IMR-90 (cell line): ENCODE measurements at regions of chr3 and their contacts with region 1.

Region 1: DNA sequence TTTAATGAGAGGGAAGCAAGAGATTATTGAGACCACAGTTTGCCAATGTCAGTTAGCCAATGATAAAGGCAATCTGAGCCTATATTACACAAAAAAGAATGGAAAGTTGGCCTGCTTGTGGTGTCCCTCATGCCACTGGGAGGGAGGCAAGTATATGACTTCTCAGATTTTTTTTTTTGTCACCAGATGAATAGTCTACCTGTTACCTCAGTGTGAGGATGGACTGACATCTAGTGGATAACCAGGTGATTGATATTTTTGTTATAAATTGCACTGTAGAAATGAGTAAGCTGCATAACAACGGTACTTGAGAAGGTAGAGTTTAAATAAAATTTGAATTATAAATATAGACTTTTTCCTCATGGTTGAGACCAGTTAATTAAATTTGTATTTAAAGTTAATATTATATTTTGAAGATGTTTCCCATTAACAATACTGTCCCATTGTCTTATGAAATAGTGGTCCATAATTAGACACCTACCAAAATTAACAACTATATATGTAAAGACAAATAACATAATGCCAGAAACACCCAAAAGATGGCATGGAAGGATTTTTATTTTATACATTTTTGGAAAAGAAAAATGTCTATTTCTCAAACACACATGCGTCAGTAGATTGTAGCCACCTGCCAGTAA is 237.8 kb upstream of the GADL1 start:
- DNase-seq: peak; percentile 53
- ATAC-seq: peak; percentile 42; the same call in 1 of the 2 replicates
- H3K4me3 ChIP-seq: no peak overlapping the region
- H3K27ac ChIP-seq: no peak overlapping the region
- H3K4me1 ChIP-seq: no peaks in the 10 kb centered on the region
- H3K27me3 ChIP-seq: no peaks in the 10 kb centered on the region; the same call in 1 of the 2 replicates
- CTCF ChIP-seq: peak; percentile 60
- POLR2A ChIP-seq: no peak
- RAD21 ChIP-seq: peak; percentile 87

Region 2: DNA sequence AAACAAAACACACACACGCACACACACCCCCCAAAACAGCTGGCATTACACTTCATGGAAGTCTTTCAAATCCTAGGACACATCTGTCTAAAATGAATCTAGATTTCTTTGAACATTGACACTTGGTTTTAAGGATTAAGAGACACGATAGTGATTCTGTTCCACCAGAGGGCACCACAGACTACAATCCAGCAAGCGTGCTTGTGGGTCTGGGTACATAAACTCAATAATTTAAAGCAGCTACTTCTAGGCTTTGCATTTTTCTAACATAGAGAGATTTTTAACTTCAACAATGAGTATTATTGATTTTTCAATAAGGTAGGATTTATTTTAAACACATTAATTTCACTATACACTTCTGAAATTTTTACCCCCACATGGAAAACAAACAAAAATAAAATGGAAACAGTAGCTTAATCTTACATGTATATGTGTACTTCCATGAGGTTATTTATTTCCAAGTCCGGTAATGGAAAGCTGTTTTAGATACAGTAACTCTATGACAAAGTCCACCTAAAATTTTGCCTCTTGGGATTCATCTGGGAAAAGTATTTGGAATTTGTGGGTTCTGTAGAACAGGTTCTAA is 1089.9 kb before region 1 on chr3:
- CTCF ChIA-PET with region 1: no interaction called
- POLR2A ChIA-PET with region 1: no interaction called
- dilution Hi-C with region 1: no loop called
- in situ Hi-C with region 1: loop called (anchors 25 kb)
- intact Hi-C with region 1: loop called (anchors 5 kb)
- DNase-seq: peak; percentile 79
- ATAC-seq: peak; percentile 81
- H3K4me3 ChIP-seq: no peak overlapping the region
- H3K27ac ChIP-seq: no peak overlapping the region
- H3K4me1 ChIP-seq: no peaks in the 10 kb centered on the region
- H3K27me3 ChIP-seq: no peaks in the 10 kb centered on the region
- CTCF ChIP-seq: peak; percentile 88
- POLR2A ChIP-seq: no peak
- RAD21 ChIP-seq: peak; percentile 92

Region 3: DNA sequence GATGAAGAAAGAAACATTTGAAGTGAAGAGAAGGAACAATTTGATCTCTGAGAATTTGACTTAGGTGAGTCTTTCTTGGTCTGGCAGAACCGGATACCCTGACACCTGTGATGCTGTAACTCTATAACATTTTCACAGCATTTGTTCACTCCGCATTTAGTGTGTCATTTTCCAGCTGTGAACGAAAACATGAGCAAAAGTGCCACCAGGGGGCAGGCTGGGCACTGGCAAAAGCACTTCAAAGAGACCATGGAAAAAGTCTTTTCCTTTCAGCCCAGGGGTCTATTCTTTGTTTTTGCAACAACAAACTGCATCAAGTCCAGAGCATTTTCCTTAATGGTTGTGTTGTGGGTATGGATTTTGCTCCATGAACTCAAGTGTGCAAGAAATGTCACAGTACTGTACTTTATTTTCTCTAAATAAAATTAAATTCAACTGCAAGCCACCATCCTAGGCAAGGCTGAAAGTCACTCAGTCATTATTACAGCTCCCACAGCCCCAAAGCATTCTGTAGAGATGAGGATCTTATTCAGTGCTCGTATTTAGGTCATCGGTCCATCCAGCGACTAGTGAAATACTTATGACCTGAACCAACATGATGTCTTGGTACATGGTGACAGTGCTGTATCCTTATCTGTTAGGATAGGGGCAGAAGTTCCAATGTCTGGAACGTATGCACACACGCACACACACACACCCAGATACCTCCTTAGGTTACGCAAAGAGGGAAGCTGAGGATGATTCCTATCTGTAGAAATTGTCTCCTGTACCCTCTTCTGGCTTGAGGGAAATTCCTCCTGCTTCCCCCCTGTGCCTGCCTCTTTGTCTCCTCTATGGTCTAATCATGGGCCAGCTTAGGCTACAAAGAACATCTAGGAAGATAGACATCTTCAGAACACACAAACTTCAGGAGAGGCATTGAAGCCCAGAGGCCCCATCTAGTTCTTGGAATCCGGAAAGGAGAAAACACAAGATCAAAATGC is 363.3 kb before region 1 on chr3:
- CTCF ChIA-PET with region 1: interaction called, 3 read pairs
- POLR2A ChIA-PET with region 1: no interaction called
- dilution Hi-C with region 1: no loop called
- in situ Hi-C with region 1: loop called (anchors 5 kb)
- intact Hi-C with region 1: loop called (anchors 1 kb)
- DNase-seq: peak; percentile 58
- ATAC-seq: peak; percentile 52
- H3K4me3 ChIP-seq: no peak overlapping the region
- H3K27ac ChIP-seq: no peak overlapping the region
- H3K4me1 ChIP-seq: 0 out of 2 replicates have a peak, but pooled peaks cover 2% of the 10 kb centered on the region
- H3K27me3 ChIP-seq: no peaks in the 10 kb centered on the region; the same call in 1 of the 2 replicates
- CTCF ChIP-seq: peak; percentile 75
- POLR2A ChIP-seq: no peak
- RAD21 ChIP-seq: peak; percentile 68

Region 4: GRCh38 chr3:30779686-30780287 is 352.5 kb before region 1 on chr3:
- CTCF ChIA-PET with region 1: interaction called, 3 read pairs
- POLR2A ChIA-PET with region 1: no interaction called
- dilution Hi-C with region 1: no loop called
- in situ Hi-C with region 1: no loop called
- intact Hi-C with region 1: loop called (anchors 1 kb)
- DNase-seq: peak; percentile 38
- ATAC-seq: peak; percentile 83
- H3K4me3 ChIP-seq: no peak overlapping the region
- H3K27ac ChIP-seq: no peak overlapping the region
- H3K4me1 ChIP-seq: no peaks in the 10 kb centered on the region
- H3K27me3 ChIP-seq: peaks cover 12% of the 10 kb centered on the region
- CTCF ChIP-seq: peak; percentile 60
- POLR2A ChIP-seq: no peak
- RAD21 ChIP-seq: peak; percentile 73

Region 5: DNA sequence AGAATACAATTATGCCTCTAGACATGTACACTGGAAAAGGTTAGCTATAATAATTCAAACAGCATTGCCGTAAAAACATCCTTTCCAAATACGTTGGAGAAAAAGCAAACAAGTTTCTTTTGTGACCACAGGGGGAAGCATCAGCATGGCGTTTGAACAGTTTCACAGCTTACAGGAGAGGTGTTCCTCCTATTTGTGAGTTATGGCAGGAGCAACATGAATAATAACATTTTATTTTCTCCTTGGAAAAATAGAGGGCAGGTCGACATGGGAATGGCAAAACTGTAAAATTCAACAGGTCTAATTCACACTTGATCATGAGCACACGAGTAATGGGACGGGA is 198.1 kb before region 1 on chr3:
- CTCF ChIA-PET with region 1: no interaction called
- POLR2A ChIA-PET with region 1: no interaction called
- dilution Hi-C with region 1: no loop called
- in situ Hi-C with region 1: no loop called
- intact Hi-C with region 1: loop called (anchors 1 kb)
- DNase-seq: peak; percentile 37
- ATAC-seq: peak; percentile 46; the same call in 1 of the 2 replicates
- H3K4me3 ChIP-seq: no peak overlapping the region
- H3K27ac ChIP-seq: no peak overlapping the region
- H3K4me1 ChIP-seq: no peaks in the 10 kb centered on the region
- H3K27me3 ChIP-seq: no peaks in the 10 kb centered on the region
- CTCF ChIP-seq: peak; percentile 41
- POLR2A ChIP-seq: no peak
- RAD21 ChIP-seq: peak; percentile 55

Region 6: DNA sequence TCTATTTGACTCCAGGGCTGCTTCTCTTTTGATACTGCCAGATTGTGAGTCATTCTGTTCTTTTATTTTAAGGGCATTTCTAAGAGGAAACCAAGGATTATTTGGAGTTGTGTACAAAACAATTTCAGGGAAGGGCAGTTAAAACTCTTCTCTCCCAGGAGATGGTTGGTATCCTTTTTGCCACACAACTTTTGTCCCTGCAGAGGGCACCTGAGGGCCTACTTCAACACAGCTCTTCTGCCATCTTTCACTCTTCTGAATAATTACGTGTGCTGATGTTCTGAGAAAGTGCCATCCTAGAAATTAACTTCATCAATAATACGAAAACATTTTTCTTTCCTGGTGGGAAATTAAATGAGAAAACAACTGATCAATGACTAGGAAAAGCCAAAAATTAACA is 162.1 kb before region 1 on chr3:
- CTCF ChIA-PET with region 1: no interaction called
- POLR2A ChIA-PET with region 1: no interaction called
- dilution Hi-C with region 1: no loop called
- in situ Hi-C with region 1: no loop called
- intact Hi-C with region 1: loop called (anchors 5 kb)
- DNase-seq: no peak
- ATAC-seq: no peak
- H3K4me3 ChIP-seq: no peak overlapping the region
- H3K27ac ChIP-seq: no peak overlapping the region
- H3K4me1 ChIP-seq: no peaks in the 10 kb centered on the region
- H3K27me3 ChIP-seq: peaks cover 1% of the 10 kb centered on the region; the same call in 1 of the 2 replicates
- CTCF ChIP-seq: peak; percentile 23; the same call in 1 of the 2 replicates
- POLR2A ChIP-seq: no peak
- RAD21 ChIP-seq: peak; percentile 11; the same call in 1 of the 2 replicates